Vagina (tissue), 2 donors: ENCODE measurements at regions of chr1 and their contacts with region 1.

Region 1: DNA sequence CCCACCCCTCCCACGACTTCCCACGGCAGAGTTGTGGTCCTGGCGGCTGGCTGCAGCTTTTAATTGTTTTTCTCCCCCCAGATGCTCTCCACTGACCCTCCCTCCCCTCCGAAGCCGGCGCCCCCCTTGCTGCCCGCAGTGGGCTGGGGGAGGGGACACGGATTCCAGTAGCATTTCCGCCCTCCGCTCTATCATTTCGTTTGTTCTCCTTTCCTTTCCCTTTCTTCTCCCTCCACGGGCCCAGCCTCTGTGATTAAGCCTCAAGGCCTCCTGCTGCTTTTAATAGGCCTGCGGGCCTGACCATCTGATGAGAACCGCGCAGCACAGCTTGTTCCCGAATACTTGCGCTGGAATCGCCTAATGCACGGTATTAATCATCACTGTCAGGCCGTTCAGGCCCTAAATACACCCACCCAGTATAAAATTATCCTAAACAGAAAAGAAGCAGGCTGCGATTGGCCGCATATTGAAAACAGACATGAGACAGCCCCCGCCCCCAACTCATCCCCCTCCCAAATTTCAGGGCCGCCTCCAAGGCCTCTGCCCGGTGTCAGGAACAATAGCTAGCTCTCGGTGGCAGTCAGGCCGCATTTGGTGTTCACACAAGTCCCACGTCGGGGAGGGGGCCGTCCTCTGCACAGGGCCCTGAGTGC is 102.0 kb upstream of the ARHGEF16 start:
- DNase-seq: no peak
- H3K4me3 ChIP-seq: peak overlapping the region in 1 of 2 donors; percentile 28
- H3K27ac ChIP-seq: peak overlapping the region; percentile 74
- H3K4me1 ChIP-seq: peaks cover 18% of the 10 kb centered on the region
- H3K27me3 ChIP-seq: no peaks in the 10 kb centered on the region
- CTCF ChIP-seq: no peak
- POLR2A ChIP-seq: no peak

Region 2: DNA sequence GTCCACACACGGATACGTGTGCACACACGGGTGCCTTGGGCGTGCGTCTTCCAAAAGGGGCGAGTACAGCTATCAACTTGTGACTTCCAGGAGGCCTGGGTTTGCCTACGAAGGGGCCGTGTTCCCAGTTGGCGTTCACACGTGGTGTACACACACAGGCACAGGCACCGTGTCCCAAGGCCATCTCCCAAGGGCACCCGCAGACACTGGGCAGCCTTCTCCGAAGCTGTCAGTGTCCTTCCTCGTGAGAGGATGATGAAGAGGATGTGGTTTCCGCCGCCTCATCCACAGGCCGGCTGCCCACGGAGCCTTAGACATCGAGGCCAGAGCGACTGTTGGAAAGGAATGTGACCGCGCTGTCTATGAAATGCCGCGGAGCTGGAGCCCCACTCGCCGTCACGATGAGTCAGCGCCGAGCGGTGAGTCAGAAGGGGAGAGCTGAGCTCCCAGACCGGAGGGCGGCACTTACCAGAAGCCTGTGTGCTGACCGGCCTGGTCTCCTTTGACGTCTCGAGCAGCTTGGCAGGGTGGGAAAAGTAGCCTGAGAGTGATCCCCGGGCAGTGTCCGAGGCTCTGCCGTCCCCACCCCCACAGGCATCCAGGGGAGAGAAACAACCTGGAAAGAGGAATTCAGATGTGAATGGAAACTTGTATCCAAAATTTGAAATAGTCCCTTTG is 39.4 kb before region 1 on chr1:
- intact Hi-C with region 1: loop called (anchors 5 kb)
- DNase-seq: peak in 1 of 2 donors; percentile 98
- H3K4me3 ChIP-seq: peak overlapping the region; percentile 3 to 12
- H3K27ac ChIP-seq: peak overlapping the region; percentile 88
- H3K4me1 ChIP-seq: peaks cover 32% of the 10 kb centered on the region
- H3K27me3 ChIP-seq: no peaks in the 10 kb centered on the region
- CTCF ChIP-seq: no peak
- POLR2A ChIP-seq: no peak

Region 3: DNA sequence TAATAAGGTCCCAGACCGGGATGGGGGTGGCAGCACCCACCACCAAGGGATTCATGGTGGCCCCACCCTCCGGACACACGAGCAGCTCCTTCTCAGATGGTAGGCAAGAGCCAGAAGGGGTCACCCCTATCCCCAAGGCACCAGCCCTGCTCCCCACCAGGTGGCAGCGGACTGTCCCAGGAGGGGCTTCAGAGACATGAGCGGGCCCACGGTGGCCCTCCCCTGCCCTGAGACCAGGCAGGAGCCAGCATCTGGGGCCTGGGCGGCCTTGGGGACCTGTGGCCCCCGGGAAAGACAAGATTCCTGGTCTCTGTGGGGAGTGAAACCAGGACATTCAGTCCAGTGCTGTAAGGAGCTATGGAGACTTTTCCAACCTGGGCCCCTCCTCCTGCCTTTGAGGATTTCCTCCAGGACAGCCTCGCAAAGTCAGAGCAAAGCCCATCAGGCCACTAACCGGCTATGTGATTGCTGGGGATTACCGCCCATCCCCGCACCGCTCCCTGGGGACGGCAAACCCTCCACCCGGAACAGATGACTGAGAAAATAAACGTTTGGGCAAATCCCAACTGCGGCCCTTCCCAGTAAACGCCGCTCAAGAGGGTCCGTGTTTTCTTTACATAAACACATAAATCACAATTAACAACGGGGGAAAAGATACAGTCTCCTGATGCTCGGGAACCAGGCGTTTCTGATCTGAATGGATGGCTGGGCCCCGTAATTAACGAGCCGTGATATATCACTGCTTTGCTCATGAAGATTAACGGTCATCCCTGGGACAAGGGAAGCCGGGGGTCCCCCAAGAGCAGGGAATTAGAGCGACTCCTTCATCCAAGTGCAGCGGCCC is 51.2 kb after region 1 on chr1:
- intact Hi-C with region 1: loop called (anchors 5 kb)
- DNase-seq: no peak
- H3K4me3 ChIP-seq: no peak overlapping the region
- H3K27ac ChIP-seq: no peak overlapping the region
- H3K4me1 ChIP-seq: peaks cover 12% of the 10 kb centered on the region
- H3K27me3 ChIP-seq: no peaks in the 10 kb centered on the region
- CTCF ChIP-seq: no peak
- POLR2A ChIP-seq: no peak

Region 4: GRCh38 chr1:3453203-3453761 is 100.9 kb after region 1 on chr1:
- intact Hi-C with region 1: no loop called
- DNase-seq: no peak
- H3K4me3 ChIP-seq: no peak overlapping the region
- H3K27ac ChIP-seq: no peak overlapping the region
- H3K4me1 ChIP-seq: peaks cover 34% of the 10 kb centered on the region
- H3K27me3 ChIP-seq: no peaks in the 10 kb centered on the region
- CTCF ChIP-seq: peak; percentile 68 to 74 (median 73)
- POLR2A ChIP-seq: no peak